ENCODE measurements at regions of chr6 and their contacts with region 1.

Region 1: GRCh38 chr6:28153546-28153945 is 11.9 kb downstream of the ZKSCAN8 start:
- DNase-seq: no peak
- ATAC-seq: no peak
- H3K4me3 Mint-ChIP-seq: no peak overlapping the region
- H3K27ac Mint-ChIP-seq: no peak overlapping the region
- H3K4me1 Mint-ChIP-seq: no peaks in the 10 kb centered on the region
- H3K27me3 Mint-ChIP-seq: no peaks in the 10 kb centered on the region
- CTCF ChIP-seq: no peak

Region 2: GRCh38 chr6:26576929-26577719 is 1576.4 kb before region 1 on chr6:
- CTCF ChIA-PET with region 1: no interaction called
- POLR2A ChIA-PET with region 1: interaction called, 11 read pairs
- intact Hi-C with region 1: no loop called
- DNase-seq: no peak
- ATAC-seq: peak; percentile 55
- H3K4me3 Mint-ChIP-seq: peak overlapping the region; percentile 73
- H3K27ac Mint-ChIP-seq: peak overlapping the region; percentile 21
- H3K4me1 Mint-ChIP-seq: peaks cover 19% of the 10 kb centered on the region
- H3K27me3 Mint-ChIP-seq: no peaks in the 10 kb centered on the region
- CTCF ChIP-seq: no peak

Region 3: DNA sequence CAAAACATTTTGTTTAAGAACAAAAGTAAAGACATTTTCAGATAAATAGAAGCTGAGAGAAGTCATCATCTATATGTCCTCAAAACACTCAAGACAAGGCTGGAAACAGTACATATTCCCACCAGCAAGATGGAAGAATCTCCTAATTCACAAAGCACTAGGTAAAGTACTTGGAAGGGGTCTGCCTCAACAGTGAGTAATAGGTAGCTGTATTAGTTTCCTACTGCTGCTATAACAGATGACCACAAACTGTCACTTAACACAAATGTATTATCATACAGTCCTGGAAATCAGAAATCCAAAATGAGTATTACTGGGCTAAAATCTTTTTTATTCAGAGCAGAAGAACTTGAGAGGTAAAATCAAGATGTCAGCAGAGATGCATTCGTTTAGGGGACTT is 28.7 kb after region 1 on chr6:
- CTCF ChIA-PET with region 1: no interaction called
- POLR2A ChIA-PET with region 1: no interaction called
- intact Hi-C with region 1: no loop called
- DNase-seq: no peak
- ATAC-seq: no peak
- H3K4me3 Mint-ChIP-seq: no peak overlapping the region
- H3K27ac Mint-ChIP-seq: no peak overlapping the region
- H3K4me1 Mint-ChIP-seq: no peaks in the 10 kb centered on the region
- H3K27me3 Mint-ChIP-seq: peaks cover 24% of the 10 kb centered on the region
- CTCF ChIP-seq: no peak

Measured in activated B cell treated with CpG ODN at 0.5 μM for 24 hours (primary cell).